ENCODE measurements at regions of chr6 and their contacts with region 1.

Region 1: GRCh38 chr6:16514249-16514648 is 247.0 kb downstream of the ATXN1 start:
- DNase-seq: peak; percentile 51
- ATAC-seq: peak; percentile 62
- H3K4me3 Mint-ChIP-seq: no peak overlapping the region
- H3K27ac Mint-ChIP-seq: no peak overlapping the region
- H3K4me1 Mint-ChIP-seq: peaks cover 69% of the 10 kb centered on the region
- H3K27me3 Mint-ChIP-seq: no peaks in the 10 kb centered on the region

Region 2: DNA sequence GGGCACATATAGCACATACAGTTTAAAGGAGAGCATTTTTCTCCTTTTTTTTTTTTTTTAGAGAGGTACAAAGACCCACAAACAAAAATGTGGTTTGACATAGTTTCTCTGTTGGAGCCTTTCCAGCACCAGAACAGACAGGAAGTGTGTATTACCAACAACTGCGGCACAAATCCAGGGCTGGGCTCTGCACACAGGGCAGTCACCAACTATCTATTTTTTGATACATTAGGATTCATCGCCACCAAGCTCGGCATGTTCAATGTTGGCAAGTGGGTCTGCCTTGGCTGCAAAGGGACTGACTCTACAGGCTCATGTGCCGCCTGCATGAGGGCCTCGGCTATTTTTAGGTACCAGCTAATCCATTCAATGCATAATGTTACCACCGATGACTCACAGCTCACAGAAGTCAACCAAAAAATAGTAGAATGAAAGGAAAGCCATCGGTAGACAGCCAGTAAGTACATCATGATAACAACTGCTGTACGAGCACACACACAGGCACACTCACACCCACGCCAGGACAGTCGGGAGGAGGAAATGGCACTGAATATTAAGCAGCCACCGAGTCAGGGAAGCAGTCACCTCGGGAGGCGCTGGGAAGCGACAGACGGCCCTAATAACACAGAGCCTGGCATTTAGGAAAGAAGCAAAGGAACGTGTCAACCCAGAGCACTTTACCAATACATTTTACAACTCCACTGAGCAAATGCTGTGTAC is 194.3 kb before region 1 on chr6:
- CTCF ChIA-PET with region 1: interaction called, 12 read pairs
- POLR2A ChIA-PET with region 1: interaction called, 3 read pairs
- DNase-seq: peak; percentile 79
- ATAC-seq: peak; percentile 79
- H3K4me3 Mint-ChIP-seq: peak overlapping the region; percentile 61
- H3K27ac Mint-ChIP-seq: peak overlapping the region; percentile 94
- H3K4me1 Mint-ChIP-seq: peaks cover 76% of the 10 kb centered on the region
- H3K27me3 Mint-ChIP-seq: no peaks in the 10 kb centered on the region

Region 3: DNA sequence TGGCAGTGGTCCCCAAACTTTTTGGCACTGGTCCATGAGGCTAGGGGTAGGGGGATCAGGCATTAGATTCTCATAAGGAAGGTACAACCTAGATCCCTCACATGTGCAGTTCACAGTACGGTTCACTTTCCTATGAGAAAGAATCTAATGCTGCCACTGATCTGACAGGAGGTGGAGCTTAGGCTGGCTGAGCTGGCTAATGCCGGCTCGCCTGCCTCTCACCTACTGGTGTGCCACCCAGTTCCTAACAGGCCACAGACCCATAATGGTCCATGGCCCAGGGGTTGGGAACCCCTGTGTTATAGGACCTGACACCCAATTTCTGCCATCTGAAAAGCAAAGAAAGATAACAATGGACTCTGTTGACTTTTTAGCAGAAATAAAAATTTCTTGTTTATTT is 76.3 kb before region 1 on chr6:
- CTCF ChIA-PET with region 1: interaction called, 10 read pairs
- POLR2A ChIA-PET with region 1: no interaction called
- DNase-seq: no peak
- ATAC-seq: peak; percentile 31
- H3K4me3 Mint-ChIP-seq: peak overlapping the region; percentile 61
- H3K27ac Mint-ChIP-seq: peak overlapping the region; percentile 48
- H3K4me1 Mint-ChIP-seq: peaks cover 57% of the 10 kb centered on the region
- H3K27me3 Mint-ChIP-seq: no peaks in the 10 kb centered on the region

Region 4: GRCh38 chr6:16494793-16495192 is 19.5 kb before region 1 on chr6:
- CTCF ChIA-PET with region 1: interaction called, 93 read pairs
- POLR2A ChIA-PET with region 1: no interaction called
- DNase-seq: no peak
- ATAC-seq: peak; percentile 35
- H3K4me3 Mint-ChIP-seq: no peak overlapping the region
- H3K27ac Mint-ChIP-seq: peak overlapping the region; percentile 48
- H3K4me1 Mint-ChIP-seq: peaks cover 53% of the 10 kb centered on the region
- H3K27me3 Mint-ChIP-seq: no peaks in the 10 kb centered on the region

Region 5: GRCh38 chr6:16657768-16658167 is 143.5 kb after region 1 on chr6:
- CTCF ChIA-PET with region 1: interaction called, 14 read pairs
- POLR2A ChIA-PET with region 1: no interaction called
- DNase-seq: no peak
- ATAC-seq: peak; percentile 13
- H3K4me3 Mint-ChIP-seq: peak overlapping the region; percentile 16
- H3K27ac Mint-ChIP-seq: peak overlapping the region; percentile 76
- H3K4me1 Mint-ChIP-seq: peaks cover 62% of the 10 kb centered on the region
- H3K27me3 Mint-ChIP-seq: no peaks in the 10 kb centered on the region

Region 6: GRCh38 chr6:16770701-16771569 is 256.7 kb after region 1 on chr6:
- CTCF ChIA-PET with region 1: interaction called, 173 read pairs
- POLR2A ChIA-PET with region 1: no interaction called
- DNase-seq: peak; percentile 82
- ATAC-seq: peak; percentile 67
- H3K4me3 Mint-ChIP-seq: peak overlapping the region; percentile 35
- H3K27ac Mint-ChIP-seq: no peak overlapping the region
- H3K4me1 Mint-ChIP-seq: peaks cover 65% of the 10 kb centered on the region
- H3K27me3 Mint-ChIP-seq: peaks cover 3% of the 10 kb centered on the region

Measured in activated CD8-positive, alpha-beta T cell treated with anti-CD3 and anti-CD28 coated beads, Interleukin-2, amount 10 ng/mL, durations not matched to agents 7 days and 5 days (primary cell).